Posterior vena cava (tissue), 2 donors: ENCODE measurements at regions of chr1 and their contacts with region 1.

Region 1: DNA sequence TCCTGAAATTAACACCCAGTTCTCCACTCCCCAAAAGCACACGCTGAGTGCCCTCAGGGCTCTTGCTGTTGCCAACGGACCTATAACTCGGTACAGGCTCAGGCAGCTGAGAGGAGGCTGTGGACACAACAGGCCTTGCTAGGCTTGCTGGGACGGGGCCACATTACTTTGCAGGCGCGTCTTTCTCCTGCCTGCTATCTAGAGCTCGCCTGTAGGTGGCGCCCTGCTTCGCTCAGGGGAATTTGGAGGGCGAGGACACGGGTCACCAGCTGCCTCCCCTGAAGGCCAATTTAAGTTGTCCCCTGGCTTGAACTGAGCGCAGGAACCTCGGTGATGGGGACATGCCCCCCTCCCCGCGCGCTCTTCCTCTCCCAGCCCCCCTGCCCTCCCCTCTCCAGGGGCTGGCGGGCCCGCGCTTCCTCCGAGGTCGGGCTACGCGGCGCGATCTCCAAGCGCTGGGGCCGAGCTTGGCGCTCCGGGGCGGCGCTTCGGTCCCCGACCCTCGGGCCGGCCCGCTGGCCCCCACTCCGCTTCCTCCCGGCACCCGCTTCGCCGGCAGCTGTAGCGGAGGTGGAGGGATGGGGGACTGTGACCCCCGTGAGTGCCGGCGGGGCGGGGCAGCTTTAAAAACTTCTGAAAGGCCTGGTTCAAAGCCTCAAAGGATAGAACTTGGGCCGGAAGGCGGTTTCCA is 32.4 kb upstream of the NFIA start:
- DNase-seq: peak; percentile 98

Region 2: GRCh38 chr1:60989749-60990713 is 60.0 kb before region 1 on chr1:
- intact Hi-C with region 1: no loop called
- DNase-seq: peak; percentile 91

Region 3: GRCh38 chr1:61190618-61191432 is 140.8 kb after region 1 on chr1:
- intact Hi-C with region 1: loop called in 1 of 2 experiments (anchors 10 kb)
- DNase-seq: no peak

Region 4: GRCh38 chr1:61337981-61338848 is 288.2 kb after region 1 on chr1:
- intact Hi-C with region 1: loop called in 1 of 2 experiments (anchors 10 kb)
- DNase-seq: no peak

Region 5: DNA sequence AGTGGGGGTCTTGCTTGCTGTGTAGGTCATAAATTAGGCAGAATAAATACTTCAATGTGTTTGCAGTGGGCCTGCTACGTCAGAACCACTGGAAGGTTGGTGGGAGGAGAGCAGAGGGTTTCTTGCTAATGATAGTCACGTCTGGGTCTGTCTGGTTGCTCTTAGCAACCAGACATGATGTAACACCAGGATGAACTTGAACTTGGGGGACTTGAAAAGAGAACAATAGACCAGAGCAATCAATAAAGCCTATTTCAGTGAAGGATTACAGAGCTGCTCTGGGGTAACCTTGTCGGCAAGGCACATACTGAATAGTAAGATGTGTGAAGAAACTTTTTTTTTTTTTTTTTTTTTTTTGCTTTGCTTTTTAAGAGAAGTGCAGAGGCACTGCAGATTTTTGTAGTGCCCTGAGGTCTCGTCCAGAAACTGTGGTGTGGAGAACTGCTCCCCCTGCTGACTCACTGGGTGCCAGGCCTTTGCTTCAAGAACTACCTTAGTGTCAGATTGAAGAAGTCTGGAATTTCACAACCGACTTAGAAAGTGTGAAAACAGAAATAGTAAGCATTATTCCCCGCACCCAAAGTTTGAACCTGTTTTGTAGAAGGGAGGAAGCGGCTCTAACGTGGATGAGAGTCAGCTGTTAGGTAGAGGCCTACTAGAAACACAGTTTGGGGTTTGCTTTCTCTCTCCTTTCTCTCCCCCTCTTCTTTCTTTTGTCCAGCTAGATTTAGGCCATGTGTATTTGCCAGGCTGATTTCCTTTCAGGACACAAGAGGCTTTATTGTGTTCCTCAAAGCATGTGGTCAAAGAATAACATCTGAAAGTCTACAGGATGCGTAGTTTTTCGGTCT is 403.3 kb after region 1 on chr1:
- intact Hi-C with region 1: loop called (anchors 5 to 10 kb)
- DNase-seq: peak; percentile 95